WTC11 (cell line): ENCODE measurements at regions of chr11 and their contacts with region 1.

Region 1: DNA sequence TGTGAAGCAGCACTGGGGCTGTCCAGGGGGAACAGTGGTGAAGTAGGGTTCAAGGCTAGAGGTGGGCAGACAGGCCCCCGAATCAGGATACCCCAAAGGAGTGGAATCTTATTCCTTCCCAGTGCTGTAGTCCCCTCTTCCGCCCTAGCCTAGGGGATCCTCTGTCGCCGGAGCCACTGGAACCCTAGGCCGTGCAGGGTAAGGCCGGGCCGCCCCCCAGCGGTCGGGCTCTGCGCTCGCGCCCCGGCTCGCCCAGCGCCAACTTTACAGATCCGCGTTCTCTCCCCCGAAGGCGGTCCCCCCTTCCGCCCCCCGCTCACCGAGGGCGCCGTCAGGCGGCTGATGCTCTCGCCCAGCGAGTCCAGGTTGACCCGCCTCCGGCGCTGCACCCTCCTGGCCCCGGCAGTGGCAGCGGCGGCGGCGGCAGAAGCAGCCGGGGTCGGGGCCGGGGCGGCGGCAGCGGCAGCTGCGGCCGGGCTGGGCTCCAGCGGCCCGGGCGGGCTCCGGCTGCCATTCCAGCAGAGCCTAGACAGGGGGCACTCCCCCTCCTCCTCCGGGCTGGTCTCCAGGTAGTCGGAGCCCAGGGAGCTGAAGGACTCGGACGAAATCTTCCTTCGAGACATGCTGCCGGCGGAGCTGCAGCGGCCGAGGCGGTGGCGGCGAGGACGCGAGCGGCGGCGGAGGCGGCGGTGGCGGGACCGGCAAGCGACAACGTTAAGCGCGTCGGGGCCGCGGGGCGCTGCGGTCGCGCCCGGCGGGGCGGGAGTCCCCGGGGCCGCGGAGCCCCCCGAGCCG is 646 bp downstream of the GUCY1A2 start:
- DNase-seq: peak; percentile 82
- ATAC-seq: peak; percentile 79
- H3K4me3 Mint-ChIP-seq: peak overlapping the region; percentile 60
- H3K27ac Mint-ChIP-seq: no peak overlapping the region
- H3K4me1 Mint-ChIP-seq: peaks cover 12% of the 10 kb centered on the region
- H3K27me3 Mint-ChIP-seq: peaks cover 51% of the 10 kb centered on the region
- CTCF ChIP-seq: peak; percentile 47; the same call in 1 of the 2 replicates

Region 2: DNA sequence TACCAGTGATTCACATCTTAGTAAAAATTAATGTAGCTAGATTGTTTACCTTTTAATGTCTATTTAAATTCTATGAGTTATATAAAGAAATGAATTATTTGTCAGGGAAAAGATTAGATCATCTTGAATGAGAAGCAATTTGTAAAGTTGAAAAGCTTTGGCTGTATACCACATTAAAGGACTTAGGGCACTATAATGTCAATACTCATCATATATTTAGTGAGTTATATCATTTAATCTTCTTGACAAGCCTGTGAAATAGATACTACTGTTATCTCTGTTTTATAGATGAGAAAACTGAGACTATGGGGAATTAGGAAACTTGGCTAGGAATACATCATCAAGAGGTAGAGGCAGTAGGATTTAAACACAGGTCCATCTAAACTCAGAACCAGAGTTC is 159.4 kb before region 1 on chr11:
- CTCF ChIA-PET with region 1: no interaction called
- POLR2A ChIA-PET with region 1: no interaction called
- DNase-seq: no peak
- ATAC-seq: no peak
- H3K4me3 Mint-ChIP-seq: no peak overlapping the region
- H3K27ac Mint-ChIP-seq: no peak overlapping the region
- H3K4me1 Mint-ChIP-seq: no peaks in the 10 kb centered on the region
- H3K27me3 Mint-ChIP-seq: no peaks in the 10 kb centered on the region
- CTCF ChIP-seq: no peak

Region 3: GRCh38 chr11:106959800-106960199 is 57.8 kb before region 1 on chr11:
- CTCF ChIA-PET with region 1: interaction called, 12 read pairs
- POLR2A ChIA-PET with region 1: no interaction called
- DNase-seq: no peak
- ATAC-seq: peak; percentile 32
- H3K4me3 Mint-ChIP-seq: no peak overlapping the region
- H3K27ac Mint-ChIP-seq: peak overlapping the region; percentile 75
- H3K4me1 Mint-ChIP-seq: peaks cover 68% of the 10 kb centered on the region
- H3K27me3 Mint-ChIP-seq: no peaks in the 10 kb centered on the region
- CTCF ChIP-seq: no peak

Region 4: GRCh38 chr11:106988151-106989077 is 29.2 kb before region 1 on chr11:
- CTCF ChIA-PET with region 1: no interaction called
- POLR2A ChIA-PET with region 1: no interaction called
- DNase-seq: no peak
- ATAC-seq: no peak
- H3K4me3 Mint-ChIP-seq: no peak overlapping the region
- H3K27ac Mint-ChIP-seq: no peak overlapping the region
- H3K4me1 Mint-ChIP-seq: peaks cover 8% of the 10 kb centered on the region
- H3K27me3 Mint-ChIP-seq: no peaks in the 10 kb centered on the region
- CTCF ChIP-seq: no peak

Region 5: GRCh38 chr11:107218117-107219013 is 200.7 kb after region 1 on chr11:
- CTCF ChIA-PET with region 1: no interaction called
- POLR2A ChIA-PET with region 1: no interaction called
- DNase-seq: no peak
- ATAC-seq: peak; percentile 47; the same call in 1 of the 2 replicates
- H3K4me3 Mint-ChIP-seq: no peak overlapping the region
- H3K27ac Mint-ChIP-seq: no peak overlapping the region
- H3K4me1 Mint-ChIP-seq: peaks cover 8% of the 10 kb centered on the region
- H3K27me3 Mint-ChIP-seq: no peaks in the 10 kb centered on the region
- CTCF ChIP-seq: no peak